Caco-2 (cell line): ENCODE measurements at regions of chr10 and their contacts with region 1.

Region 1: DNA sequence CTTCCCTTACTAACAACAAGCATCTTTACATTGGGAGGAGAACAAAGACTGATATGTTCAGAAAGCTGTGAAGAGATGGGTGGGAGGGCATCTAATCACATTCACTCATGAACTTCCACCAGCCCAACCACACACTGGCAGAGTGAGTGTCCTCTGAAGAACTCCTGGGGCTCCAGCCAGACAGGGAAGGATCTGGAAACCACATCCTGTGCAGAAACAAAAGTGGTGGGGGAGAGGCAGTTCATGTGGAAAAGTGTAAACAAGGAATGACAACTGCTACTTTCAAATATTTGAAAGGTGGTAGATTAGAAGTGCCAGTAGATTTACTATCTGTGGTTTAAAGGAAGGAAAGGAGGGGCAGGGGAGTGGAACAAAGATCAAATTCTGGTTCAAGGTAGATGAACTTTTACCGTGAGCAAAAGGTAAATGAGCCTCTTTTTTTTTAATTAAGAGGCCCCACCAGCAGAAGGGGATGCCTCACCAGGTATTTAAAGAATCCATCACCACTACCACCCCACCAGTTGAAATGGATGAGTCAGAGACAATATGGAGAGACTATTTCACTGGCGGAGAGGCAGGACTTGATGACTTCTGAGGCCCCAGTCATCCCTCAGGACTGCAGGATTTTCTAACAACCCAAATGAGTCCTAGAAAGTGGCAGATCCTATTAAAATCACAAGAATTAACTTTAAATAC is 34.5 kb downstream of the GOT1 start:
- DNase-seq: no peak
- H3K4me3 ChIP-seq: no peak overlapping the region
- H3K4me3 Mint-ChIP-seq: no peak overlapping the region
- H3K27ac Mint-ChIP-seq: peak overlapping the region; percentile 11
- H3K4me1 ChIP-seq: peaks cover 29% of the 10 kb centered on the region
- H3K4me1 Mint-ChIP-seq: peaks cover 18% of the 10 kb centered on the region
- H3K27me3 ChIP-seq: no peaks in the 10 kb centered on the region
- H3K27me3 Mint-ChIP-seq: no peaks in the 10 kb centered on the region
- CTCF ChIP-seq: no peak

Region 2: DNA sequence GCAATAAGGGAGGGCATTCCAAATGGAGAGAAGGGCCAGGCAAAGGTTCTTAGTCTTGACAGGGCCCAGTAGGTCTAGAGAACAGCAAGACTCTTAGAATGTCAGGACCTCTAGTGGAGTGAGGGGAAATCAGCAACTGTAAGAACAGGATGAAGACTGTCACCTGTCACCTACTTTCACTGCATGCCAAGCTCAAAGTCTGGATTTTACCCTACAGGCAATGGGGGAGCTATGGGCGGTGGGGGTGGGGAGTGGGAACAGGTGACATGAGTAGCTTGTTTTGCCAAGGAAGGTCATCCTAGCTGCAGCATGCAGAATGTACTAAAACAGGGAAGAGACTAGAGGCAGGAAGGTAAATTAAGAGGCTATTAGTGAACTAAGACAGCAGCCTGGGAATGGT is 16.2 kb after region 1 on chr10:
- CTCF ChIA-PET with region 1: interaction called, 9 read pairs
- POLR2A ChIA-PET with region 1: no interaction called
- intact Hi-C with region 1: loop called (anchors 1 kb)
- DNase-seq: peak; percentile 33 to 54
- H3K4me3 ChIP-seq: no peak overlapping the region
- H3K4me3 Mint-ChIP-seq: no peak overlapping the region
- H3K27ac Mint-ChIP-seq: no peak overlapping the region
- H3K4me1 ChIP-seq: peaks cover 11% of the 10 kb centered on the region
- H3K4me1 Mint-ChIP-seq: peaks cover 12% of the 10 kb centered on the region
- H3K27me3 ChIP-seq: no peaks in the 10 kb centered on the region
- H3K27me3 Mint-ChIP-seq: no peaks in the 10 kb centered on the region
- CTCF ChIP-seq: peak in 1 of 2 experiments; percentile 53

Region 3: DNA sequence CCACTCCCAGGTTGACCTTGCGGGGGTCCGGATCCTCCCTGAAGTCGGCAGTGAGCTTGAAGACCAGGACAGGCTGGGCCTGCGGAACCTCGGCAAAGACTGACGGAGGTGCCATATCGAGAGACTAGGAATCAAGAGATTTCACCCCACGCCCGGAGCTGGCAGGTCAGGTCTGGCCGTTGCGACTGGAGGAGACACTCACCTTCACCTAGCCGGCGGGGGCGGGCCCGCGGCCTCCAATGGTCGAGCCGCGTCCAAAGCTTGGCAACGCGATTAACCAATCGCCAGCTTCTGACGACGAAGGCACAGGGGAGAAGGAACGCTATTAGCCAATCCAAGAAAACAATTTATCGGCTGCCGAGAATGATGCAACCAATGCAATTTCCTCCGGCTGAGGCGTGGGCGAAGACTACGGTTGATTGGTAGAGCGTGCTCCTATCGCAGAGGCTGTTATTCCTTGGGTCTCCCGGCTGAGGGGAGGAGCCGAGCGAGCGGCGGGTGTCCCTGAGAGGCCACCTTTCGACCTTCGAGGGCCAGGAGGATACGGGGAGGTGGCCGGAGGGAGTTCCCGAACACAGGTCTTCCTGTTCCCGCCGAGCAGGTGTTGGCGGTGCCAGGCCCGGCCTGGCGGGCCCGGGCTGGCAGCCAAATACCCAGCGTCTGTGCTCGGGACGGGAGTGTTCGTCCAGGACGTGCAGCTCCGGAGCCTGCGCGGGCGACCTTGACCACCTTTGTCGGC is 34.7 kb after region 1 on chr10 and contains the start of gene GOT1:
- CTCF ChIA-PET with region 1: no interaction called
- POLR2A ChIA-PET with region 1: no interaction called
- intact Hi-C with region 1: loop called (anchors 1 kb)
- DNase-seq: peak; percentile 98
- H3K4me3 ChIP-seq: peak within 1 kb of the TSS; percentile 97
- H3K4me3 Mint-ChIP-seq: peak within 1 kb of the TSS; percentile 99
- H3K27ac Mint-ChIP-seq: peak within 1 kb of the TSS; percentile 97
- H3K4me1 ChIP-seq: no peaks in the 10 kb centered on the region; the same call in 1 of the 2 replicates
- H3K4me1 Mint-ChIP-seq: peaks cover 12% of the 10 kb centered on the region
- H3K27me3 ChIP-seq: no peaks in the 10 kb centered on the region
- H3K27me3 Mint-ChIP-seq: no peaks in the 10 kb centered on the region
- CTCF ChIP-seq: no peak
- total RNA-seq, gene GOT1: 58.5 and 59.8 TPM in 2 replicates

Region 4: DNA sequence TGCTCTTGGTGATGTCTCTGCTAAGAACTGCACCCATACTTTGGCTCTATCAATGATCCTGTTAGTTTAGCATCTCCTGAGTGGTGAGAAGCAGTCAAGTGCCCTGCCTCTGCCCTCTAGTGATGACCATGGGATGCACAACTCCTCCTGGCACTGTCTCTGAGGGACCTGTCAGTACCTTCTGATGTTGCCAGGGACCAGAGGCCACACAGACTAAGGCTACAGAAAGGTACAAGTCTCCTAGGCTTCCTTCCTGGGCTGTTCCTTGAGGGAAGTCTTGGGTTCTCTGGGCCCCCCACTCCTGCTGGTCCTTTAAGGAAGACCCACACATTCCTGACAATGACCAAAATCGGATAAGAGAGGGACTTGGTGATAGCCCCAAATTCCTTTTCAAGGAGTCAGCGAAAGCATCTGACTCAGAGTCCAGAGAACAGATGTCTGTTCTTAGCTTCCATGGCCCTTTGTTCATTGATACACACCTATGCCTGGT is 152.2 kb after region 1 on chr10:
- CTCF ChIA-PET with region 1: no interaction called
- POLR2A ChIA-PET with region 1: no interaction called
- intact Hi-C with region 1: loop called (anchors 2 kb)
- DNase-seq: peak in 1 of 2 experiments; percentile 53
- H3K4me3 ChIP-seq: no peak overlapping the region
- H3K4me3 Mint-ChIP-seq: no peak overlapping the region
- H3K27ac Mint-ChIP-seq: no peak overlapping the region
- H3K4me1 ChIP-seq: peaks cover 13% of the 10 kb centered on the region
- H3K4me1 Mint-ChIP-seq: peaks cover 7% of the 10 kb centered on the region
- H3K27me3 ChIP-seq: no peaks in the 10 kb centered on the region
- H3K27me3 Mint-ChIP-seq: no peaks in the 10 kb centered on the region
- CTCF ChIP-seq: peak; percentile 21 to 63

Region 5: GRCh38 chr10:99612167-99612831 is 216.4 kb after region 1 on chr10:
- CTCF ChIA-PET with region 1: interaction called, 4 read pairs
- POLR2A ChIA-PET with region 1: no interaction called
- intact Hi-C with region 1: loop called (anchors 2 kb)
- DNase-seq: peak in 1 of 2 experiments; percentile 76
- H3K4me3 ChIP-seq: no peak overlapping the region
- H3K4me3 Mint-ChIP-seq: no peak overlapping the region
- H3K27ac Mint-ChIP-seq: no peak overlapping the region
- H3K4me1 ChIP-seq: no peaks in the 10 kb centered on the region
- H3K4me1 Mint-ChIP-seq: no peaks in the 10 kb centered on the region
- H3K27me3 ChIP-seq: no peaks in the 10 kb centered on the region
- H3K27me3 Mint-ChIP-seq: no peaks in the 10 kb centered on the region
- CTCF ChIP-seq: peak; percentile 77 to 81